HEK293 (cell line): ENCODE measurements at regions of chr14 and their contacts with region 1.

Region 1: DNA sequence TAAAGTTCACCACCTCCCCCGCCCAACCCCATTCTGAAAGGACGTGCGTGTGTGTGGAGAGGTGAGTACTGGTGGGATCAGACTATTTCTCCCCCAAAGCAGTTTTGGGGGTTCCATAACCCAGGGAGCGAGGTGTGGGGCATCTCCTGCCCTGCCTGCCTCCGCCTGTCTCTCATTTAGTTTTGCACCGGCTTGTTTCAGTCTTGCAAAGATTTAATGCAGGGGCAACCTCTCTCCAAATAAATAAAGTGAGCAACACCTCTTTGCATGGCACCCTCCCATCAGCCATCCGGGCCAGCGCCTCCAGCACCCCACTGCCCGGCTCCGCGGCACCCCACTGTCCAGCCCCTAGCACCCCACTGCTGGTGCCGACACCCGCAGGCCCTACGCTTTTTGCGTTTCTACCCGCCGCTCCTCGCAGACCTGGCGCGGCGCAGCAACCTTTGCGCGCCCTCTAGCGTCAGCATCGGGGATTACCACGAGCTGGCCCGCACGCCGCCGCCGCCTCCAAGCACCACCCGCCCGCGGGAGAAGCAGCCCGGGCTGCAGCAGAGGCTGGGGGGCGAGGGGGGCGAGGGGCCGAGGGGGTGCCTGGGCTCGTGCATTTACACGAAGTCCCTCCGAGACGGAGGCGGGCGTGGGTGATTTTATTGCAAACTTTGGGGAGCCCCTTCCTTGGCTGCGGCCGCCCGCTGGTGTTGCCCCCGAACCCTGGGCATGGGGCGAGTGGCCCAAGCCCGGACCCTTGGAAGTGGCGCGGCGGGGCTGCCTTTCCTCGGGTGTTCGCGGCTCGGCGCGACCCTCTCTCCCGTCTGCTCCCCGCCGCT is 55.8 kb upstream of the VRK1 start:
- H3K4me3 ChIP-seq: peak overlapping the region; percentile 48
- H3K27ac ChIP-seq: no peak overlapping the region
- H3K4me1 ChIP-seq: no peaks in the 10 kb centered on the region
- CTCF ChIP-seq: peak; percentile 92

Region 2: GRCh38 chr14:96584199-96584906 is 157.0 kb before region 1 on chr14:
- CTCF ChIA-PET with region 1: interaction called, 33 read pairs
- POLR2A ChIA-PET with region 1: no interaction called
- H3K4me3 ChIP-seq: no peak overlapping the region
- H3K27ac ChIP-seq: no peak overlapping the region
- H3K4me1 ChIP-seq: no peaks in the 10 kb centered on the region
- CTCF ChIP-seq: peak; percentile 95

Region 3: GRCh38 chr14:96727491-96727890 is 13.9 kb before region 1 on chr14:
- CTCF ChIA-PET with region 1: interaction called, 10 read pairs
- POLR2A ChIA-PET with region 1: no interaction called
- H3K4me3 ChIP-seq: no peak overlapping the region
- H3K27ac ChIP-seq: no peak overlapping the region
- H3K4me1 ChIP-seq: peaks cover 3% of the 10 kb centered on the region; the same call in 1 of the 2 replicates
- CTCF ChIP-seq: no peak

Region 4: DNA sequence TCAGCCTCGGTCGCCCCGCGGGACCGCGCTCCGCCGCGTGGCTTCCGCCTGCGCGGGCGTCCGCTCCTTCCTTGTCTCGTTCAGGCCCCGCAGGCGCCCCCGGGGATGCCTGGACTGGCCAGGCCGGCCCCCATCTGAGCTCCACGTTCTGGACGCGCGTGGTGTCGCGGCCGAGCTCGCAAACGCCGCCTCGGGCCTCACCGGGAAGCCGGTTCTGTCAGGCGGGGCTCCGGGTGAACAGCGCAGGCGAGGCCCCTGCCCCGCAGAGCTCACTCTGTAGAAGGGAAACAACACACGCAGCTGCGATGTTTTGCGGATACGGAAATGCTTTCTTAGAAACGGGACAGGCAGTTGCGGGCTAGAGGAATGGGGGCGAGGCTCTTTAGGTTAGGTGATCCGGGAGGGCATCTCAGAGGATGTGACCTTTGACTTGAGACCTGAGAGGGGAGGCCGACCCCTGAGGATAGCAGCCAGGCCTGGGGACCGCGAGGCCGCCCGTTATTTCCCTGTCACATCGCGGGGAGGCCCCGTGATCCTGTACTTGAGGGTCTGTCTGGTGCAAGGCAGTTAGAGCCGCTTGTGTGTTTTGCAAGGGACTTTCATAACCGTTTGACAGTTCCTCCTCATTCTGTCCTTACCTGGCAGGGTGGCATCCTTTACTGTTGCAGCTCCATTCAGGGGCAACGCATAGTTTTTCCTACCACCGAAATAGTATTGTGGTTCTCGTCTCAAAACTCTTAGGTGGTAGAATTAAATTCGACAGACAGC is 56.4 kb after region 1 on chr14:
- CTCF ChIA-PET with region 1: no interaction called
- POLR2A ChIA-PET with region 1: no interaction called
- H3K4me3 ChIP-seq: peak overlapping the region; percentile 90
- H3K27ac ChIP-seq: peak overlapping the region; percentile 93
- H3K4me1 ChIP-seq: peaks cover 17% of the 10 kb centered on the region; the same call in 1 of the 2 replicates
- CTCF ChIP-seq: 0 out of 2 replicates have a peak, but pooled peaks have one; percentile 16